WTC11 (cell line): ENCODE measurements at regions of chr2 and their contacts with region 1.

Region 1: DNA sequence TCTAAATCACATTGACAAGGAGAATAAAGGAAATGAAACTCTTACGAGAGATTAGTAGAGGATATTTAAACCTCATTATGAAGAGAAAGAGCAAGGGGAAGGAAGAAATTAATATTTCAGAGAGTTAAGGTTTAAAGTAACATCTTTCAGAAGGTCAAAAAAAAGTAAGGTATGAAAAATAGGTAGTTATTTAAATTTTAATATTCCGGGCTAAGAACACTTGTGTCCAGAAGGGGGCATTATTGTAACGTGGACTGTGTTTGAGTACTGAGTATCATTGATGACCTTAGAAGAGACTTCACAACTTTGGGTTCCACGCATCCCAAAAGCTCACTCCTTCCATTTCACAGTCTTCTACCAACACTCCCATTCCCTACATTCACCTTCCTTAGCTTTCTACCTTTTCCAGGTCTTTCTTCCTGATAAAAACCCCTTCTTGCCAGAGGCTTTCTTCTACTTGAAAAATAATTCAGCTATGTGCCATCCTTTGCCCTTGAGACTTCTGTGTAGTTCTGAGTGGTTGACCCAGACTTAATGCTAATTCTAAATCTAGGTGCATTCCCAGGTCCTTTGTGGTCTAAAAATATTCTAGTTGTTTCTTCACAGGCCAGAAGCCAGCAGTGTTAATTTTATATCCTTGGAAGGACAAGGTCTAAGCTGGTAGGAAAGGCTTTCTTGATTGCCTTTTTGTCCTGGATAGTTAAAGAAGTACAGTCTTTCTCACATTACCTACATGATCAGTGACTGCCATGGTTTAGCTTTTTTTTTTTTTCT is 16.5 kb downstream of the DYNC1I2 start:
- DNase-seq: no peak
- ATAC-seq: peak; percentile 52; the same call in 1 of the 2 replicates
- H3K4me3 Mint-ChIP-seq: no peak overlapping the region
- H3K27ac Mint-ChIP-seq: peak overlapping the region; percentile 67; the same call in 1 of the 2 replicates
- H3K4me1 Mint-ChIP-seq: peaks cover 8% of the 10 kb centered on the region; the same call in 1 of the 2 replicates
- H3K27me3 Mint-ChIP-seq: no peaks in the 10 kb centered on the region
- CTCF ChIP-seq: peak; percentile 28; the same call in 1 of the 2 replicates

Region 2: DNA sequence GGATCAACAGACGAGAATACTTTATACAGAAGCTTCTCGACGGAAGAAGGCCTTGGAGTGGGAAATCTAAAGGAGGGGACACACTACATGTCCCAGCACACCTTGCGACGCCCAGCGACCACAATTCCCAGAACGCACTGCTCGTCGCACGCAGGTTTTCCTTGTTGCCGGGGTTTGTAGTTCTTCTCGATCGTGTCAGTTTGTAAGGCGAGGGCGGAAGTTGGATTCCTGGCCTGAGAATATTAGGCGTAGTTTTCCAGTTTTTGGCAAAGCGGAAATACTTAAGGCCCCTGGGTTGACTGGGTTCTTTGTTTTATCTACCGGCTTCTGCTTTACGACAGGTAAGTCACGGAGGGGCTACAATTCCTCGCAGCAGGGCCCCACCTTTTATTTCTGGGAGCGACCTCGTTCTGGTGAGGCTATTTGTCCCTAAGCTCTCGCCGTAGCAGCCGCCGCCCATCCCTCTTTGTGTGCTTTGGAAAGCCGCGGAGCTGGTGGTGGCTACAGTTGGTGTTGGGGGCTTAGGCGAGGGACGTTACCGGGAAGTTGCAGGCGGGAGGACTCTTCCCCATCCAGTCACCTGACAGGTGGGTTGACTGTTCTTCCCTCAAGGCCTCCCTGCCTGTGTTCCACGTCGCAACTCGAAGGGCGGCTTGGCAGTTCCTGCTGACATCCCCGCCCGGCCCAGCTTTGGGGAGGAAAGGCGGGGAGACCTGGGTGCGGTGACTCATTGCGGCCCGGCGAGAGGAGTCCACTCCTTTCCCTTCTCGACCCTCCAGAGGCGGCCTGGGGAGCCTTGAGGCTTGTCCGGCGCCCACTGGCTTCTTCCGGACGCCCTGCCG is 16.3 kb before region 1 on chr2 and contains the start of gene DYNC1I2:
- CTCF ChIA-PET with region 1: interaction called, 13 read pairs
- POLR2A ChIA-PET with region 1: no interaction called
- DNase-seq: peak; percentile 83
- ATAC-seq: peak; percentile 98
- H3K4me3 Mint-ChIP-seq: peak within 1 kb of the TSS; percentile 97
- H3K27ac Mint-ChIP-seq: peak within 1 kb of the TSS; percentile 79
- H3K4me1 Mint-ChIP-seq: peaks cover 10% of the 10 kb centered on the region
- H3K27me3 Mint-ChIP-seq: peaks cover 4% of the 10 kb centered on the region
- CTCF ChIP-seq: no peak
- total RNA-seq, gene DYNC1I2: 67.9 to 73.7 TPM (median 69.1 TPM) in 3 replicates